ENCODE measurements at regions of chr17 and their contacts with region 1.

Region 1: GRCh38 chr17:81018044-81018802 is 16.7 kb upstream of the BAIAP2 start:
- DNase-seq: peak; percentile 75
- ATAC-seq: peak; percentile 89
- H3K4me3 Mint-ChIP-seq: peak overlapping the region; percentile 74
- H3K27ac Mint-ChIP-seq: peak overlapping the region; percentile 94
- H3K4me1 Mint-ChIP-seq: peaks cover 52% of the 10 kb centered on the region
- H3K27me3 Mint-ChIP-seq: no peaks in the 10 kb centered on the region

Region 2: GRCh38 chr17:80987941-80988461 is 30.2 kb before region 1 on chr17:
- CTCF ChIA-PET with region 1: interaction called, 14 read pairs
- POLR2A ChIA-PET with region 1: interaction called, 6 read pairs
- DNase-seq: no peak
- ATAC-seq: no peak
- H3K4me3 Mint-ChIP-seq: no peak overlapping the region
- H3K27ac Mint-ChIP-seq: no peak overlapping the region
- H3K4me1 Mint-ChIP-seq: peaks cover 20% of the 10 kb centered on the region
- H3K27me3 Mint-ChIP-seq: peaks cover 7% of the 10 kb centered on the region

Region 3: DNA sequence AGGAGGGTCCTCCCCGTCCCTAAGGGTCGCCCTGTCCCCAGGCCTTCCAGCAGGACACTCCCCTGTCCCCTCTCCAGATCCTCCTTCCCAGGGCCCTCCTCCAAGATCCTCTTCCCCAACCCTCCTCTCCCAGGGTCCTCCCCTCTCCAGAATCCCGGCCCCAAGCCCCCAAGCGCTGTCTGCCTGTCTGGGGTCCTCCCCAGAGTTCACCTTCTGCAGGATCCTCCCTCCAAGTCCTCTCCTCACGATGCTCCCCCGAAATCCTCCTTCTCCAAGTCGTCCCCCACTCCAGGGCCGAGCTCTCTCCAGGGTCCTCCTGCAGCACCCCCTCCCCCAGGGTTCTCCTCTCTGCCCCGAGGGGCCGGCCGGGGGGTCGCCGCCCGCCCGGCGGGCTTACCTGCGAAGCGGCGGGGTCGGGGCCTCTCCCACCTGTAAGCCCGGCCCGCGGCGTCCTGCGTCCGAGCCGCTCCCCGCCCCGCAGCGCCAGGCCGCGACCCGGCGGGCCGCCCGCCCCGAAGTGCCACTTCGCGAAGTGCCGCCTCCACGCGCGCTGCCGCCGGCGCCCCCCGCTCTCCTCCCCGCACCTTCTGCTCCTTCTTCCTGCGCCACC is 16.1 kb after region 1 on chr17:
- CTCF ChIA-PET with region 1: interaction called, 15 read pairs
- POLR2A ChIA-PET with region 1: no interaction called
- DNase-seq: no peak
- ATAC-seq: peak; percentile 34
- H3K4me3 Mint-ChIP-seq: peak overlapping the region; percentile 67
- H3K27ac Mint-ChIP-seq: no peak overlapping the region
- H3K4me1 Mint-ChIP-seq: peaks cover 13% of the 10 kb centered on the region
- H3K27me3 Mint-ChIP-seq: peaks cover 39% of the 10 kb centered on the region

Region 4: GRCh38 chr17:81063106-81064093 is 45.2 kb after region 1 on chr17:
- CTCF ChIA-PET with region 1: no interaction called
- POLR2A ChIA-PET with region 1: no interaction called
- DNase-seq: no peak
- ATAC-seq: no peak
- H3K4me3 Mint-ChIP-seq: no peak overlapping the region
- H3K27ac Mint-ChIP-seq: no peak overlapping the region
- H3K4me1 Mint-ChIP-seq: peaks cover 2% of the 10 kb centered on the region
- H3K27me3 Mint-ChIP-seq: no peaks in the 10 kb centered on the region

Region 5: GRCh38 chr17:81094509-81095382 is 76.5 kb after region 1 on chr17:
- CTCF ChIA-PET with region 1: interaction called, 29 read pairs
- POLR2A ChIA-PET with region 1: interaction called, 4 read pairs
- DNase-seq: peak; percentile 95
- ATAC-seq: peak; percentile 91
- H3K4me3 Mint-ChIP-seq: peak overlapping the region; percentile 58
- H3K27ac Mint-ChIP-seq: peak overlapping the region; percentile 88
- H3K4me1 Mint-ChIP-seq: peaks cover 43% of the 10 kb centered on the region
- H3K27me3 Mint-ChIP-seq: peaks cover 2% of the 10 kb centered on the region

Measured in activated CD8-positive, alpha-beta T cell treated with anti-CD3 and anti-CD28 coated beads, Interleukin-2, amount 10 ng/mL, durations not matched to agents 7 days and 5 days (primary cell).